Aorta (tissue), 5 donors: ENCODE measurements at regions of chr4 and their contacts with region 1.

Region 1: GRCh38 chr4:3773552-3774001 is 7.4 kb downstream of the ADRA2C start:
- DNase-seq: no peak
- ATAC-seq: no peak
- H3K4me3 ChIP-seq: no peak overlapping the region
- H3K27ac ChIP-seq: no peak overlapping the region
- H3K4me1 ChIP-seq: no peaks in the 10 kb centered on the region
- H3K27me3 ChIP-seq: no peaks in the 10 kb centered on the region

Region 2: GRCh38 chr4:3945511-3946290 is 172.1 kb after region 1 on chr4:
- intact Hi-C with region 1: loop called in 1 of 2 experiments (anchors 10 kb)
- DNase-seq: no peak
- ATAC-seq: no peak
- H3K4me3 ChIP-seq: no peak overlapping the region
- H3K27ac ChIP-seq: no peak overlapping the region
- H3K4me1 ChIP-seq: no peaks in the 10 kb centered on the region
- H3K27me3 ChIP-seq: no peaks in the 10 kb centered on the region

Region 3: DNA sequence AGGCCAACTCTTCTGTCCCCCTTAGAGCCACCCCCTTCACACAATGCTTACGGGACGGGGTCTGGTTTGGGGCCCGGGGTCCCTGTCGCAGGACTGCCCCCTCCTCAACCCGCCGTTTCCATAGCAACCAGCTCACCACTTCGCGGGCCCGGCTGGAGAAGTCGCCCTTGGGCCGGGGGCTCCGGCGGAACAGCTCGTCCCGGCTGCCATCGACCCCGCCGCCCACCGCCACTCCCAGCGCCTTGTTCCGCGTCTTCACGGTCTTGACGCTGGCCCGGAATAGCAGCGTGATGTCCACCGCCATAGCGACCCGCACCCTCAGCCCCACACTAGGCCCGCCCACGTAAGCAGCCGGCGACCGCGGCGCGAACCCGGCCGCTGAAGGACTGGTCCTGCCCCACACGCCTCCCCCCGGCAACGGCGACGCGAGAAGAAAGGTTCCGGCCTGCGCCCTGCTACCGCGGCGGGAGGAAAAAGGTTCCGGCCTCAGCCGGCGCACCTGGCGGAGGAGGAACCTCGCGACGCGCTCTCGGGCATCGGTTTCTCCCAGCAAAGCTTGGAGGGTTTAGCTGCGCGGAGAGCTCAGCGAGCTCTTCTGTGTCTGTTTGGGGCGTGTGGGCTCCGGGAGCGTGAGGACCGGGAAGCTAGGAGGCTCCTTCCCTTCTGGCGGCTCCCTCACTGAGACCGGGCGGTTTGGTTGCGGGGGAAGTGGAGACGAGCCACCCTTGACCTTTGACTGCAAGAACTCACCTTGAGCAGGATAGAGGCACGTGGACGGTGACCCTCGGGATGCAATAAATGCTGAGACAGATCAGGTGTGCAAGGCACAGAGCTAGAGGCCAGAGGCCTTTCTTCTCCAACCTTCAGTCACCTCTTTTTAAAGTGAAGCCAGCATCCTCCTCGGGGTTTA is 768.3 kb after region 1 on chr4 and contains the start of gene STX18:
- intact Hi-C with region 1: no loop called
- DNase-seq: peak; percentile 90 to 96
- ATAC-seq: peak; percentile 98
- H3K4me3 ChIP-seq: peak within 1 kb of the TSS; percentile 29 to 90
- H3K27ac ChIP-seq: peak within 1 kb of the TSS in 1 of 2 donors; percentile 6
- H3K4me1 ChIP-seq: no peaks in the 10 kb centered on the region
- H3K27me3 ChIP-seq: no peaks in the 10 kb centered on the region
- total RNA-seq, gene STX18: 23.6 to 36.0 TPM